Left ventricle myocardium inferior (tissue), 1 donor: ENCODE measurements at regions of chr13 and their contacts with region 1.

Region 1: GRCh38 chr13:67229481-67230403 is at the start of gene PCDH9:
- DNase-seq: no peak
- H3K4me3 ChIP-seq: peak within 1 kb of the TSS; percentile 87
- H3K27ac ChIP-seq: peak within 1 kb of the TSS; percentile 99
- H3K4me1 ChIP-seq: peaks cover 82% of the 10 kb centered on the region
- H3K27me3 ChIP-seq: no peaks in the 10 kb centered on the region
- CTCF ChIP-seq: no peak
- total RNA-seq, gene PCDH9: 14.7 TPM

Region 2: DNA sequence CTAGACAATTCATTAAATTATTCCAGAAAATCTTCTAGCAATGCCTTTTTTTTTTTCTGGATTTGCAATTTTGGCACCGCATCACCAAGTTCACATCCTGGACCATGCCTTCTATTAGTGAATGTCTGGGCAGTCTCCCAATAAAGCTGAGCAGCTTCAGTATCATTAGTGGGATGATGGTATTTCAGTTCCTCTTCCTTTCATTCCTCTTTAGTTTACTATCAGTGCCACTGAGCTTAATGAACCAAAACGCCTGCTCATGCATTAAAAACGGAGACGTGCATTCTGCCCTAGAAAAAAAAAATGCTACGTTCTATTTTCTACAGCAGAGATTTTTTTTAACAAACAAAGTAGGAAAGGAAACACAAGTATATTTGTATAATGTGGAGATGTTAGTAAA is 342.7 kb before region 1 on chr13:
- intact Hi-C with region 1: no loop called
- DNase-seq: no peak
- H3K4me3 ChIP-seq: no peak overlapping the region
- H3K27ac ChIP-seq: no peak overlapping the region
- H3K4me1 ChIP-seq: no peaks in the 10 kb centered on the region
- H3K27me3 ChIP-seq: no peaks in the 10 kb centered on the region
- CTCF ChIP-seq: no peak

Region 3: DNA sequence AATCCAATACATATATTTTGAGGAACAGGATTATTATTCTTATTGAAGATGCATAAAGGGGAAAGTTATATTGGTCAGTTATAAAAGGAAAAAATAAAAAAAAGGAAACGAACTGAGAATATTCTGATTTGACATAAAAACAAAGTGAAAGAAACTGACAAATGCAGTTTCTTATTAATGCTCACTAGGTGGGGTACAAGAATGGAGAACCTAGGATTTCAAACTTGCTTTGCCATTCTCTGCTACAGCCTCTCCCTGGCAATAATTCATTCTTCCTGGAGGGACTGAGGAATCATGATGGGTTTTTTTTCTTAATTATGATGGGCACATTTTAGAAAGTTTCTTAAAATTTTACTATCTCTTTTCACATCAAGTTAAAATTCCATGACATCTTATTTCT is 154.5 kb before region 1 on chr13:
- intact Hi-C with region 1: loop called (anchors 5 kb)
- DNase-seq: no peak
- H3K4me3 ChIP-seq: peak overlapping the region; percentile 43
- H3K27ac ChIP-seq: no peak overlapping the region
- H3K4me1 ChIP-seq: no peaks in the 10 kb centered on the region
- H3K27me3 ChIP-seq: no peaks in the 10 kb centered on the region
- CTCF ChIP-seq: peak; percentile 52

Region 4: GRCh38 chr13:68199271-68199670 is 969.5 kb after region 1 on chr13:
- intact Hi-C with region 1: no loop called
- DNase-seq: no peak
- H3K4me3 ChIP-seq: no peak overlapping the region
- H3K27ac ChIP-seq: no peak overlapping the region
- H3K4me1 ChIP-seq: no peaks in the 10 kb centered on the region
- H3K27me3 ChIP-seq: no peaks in the 10 kb centered on the region
- CTCF ChIP-seq: no peak